ENCODE measurements at regions of chr3 and their contacts with region 1.

Region 1: GRCh38 chr3:138923531-138923994 is 23.4 kb downstream of the FOXL2 start:
- DNase-seq: peak; percentile 72
- H3K4me3 Mint-ChIP-seq: no peak overlapping the region
- H3K27ac Mint-ChIP-seq: no peak overlapping the region
- H3K4me1 Mint-ChIP-seq: peaks cover 2% of the 10 kb centered on the region
- H3K27me3 Mint-ChIP-seq: peaks cover 11% of the 10 kb centered on the region

Region 2: GRCh38 chr3:138417559-138417982 is 506.0 kb before region 1 on chr3:
- intact Hi-C with region 1: loop called (anchors 1 kb)
- DNase-seq: peak; percentile 36
- H3K4me3 Mint-ChIP-seq: no peak overlapping the region
- H3K27ac Mint-ChIP-seq: no peak overlapping the region
- H3K4me1 Mint-ChIP-seq: peaks cover 2% of the 10 kb centered on the region
- H3K27me3 Mint-ChIP-seq: peaks cover 21% of the 10 kb centered on the region

Region 3: GRCh38 chr3:138479438-138479863 is 444.1 kb before region 1 on chr3:
- intact Hi-C with region 1: loop called (anchors 2 kb)
- DNase-seq: no peak
- H3K4me3 Mint-ChIP-seq: no peak overlapping the region
- H3K27ac Mint-ChIP-seq: no peak overlapping the region
- H3K4me1 Mint-ChIP-seq: no peaks in the 10 kb centered on the region
- H3K27me3 Mint-ChIP-seq: peaks cover 7% of the 10 kb centered on the region

Region 4: DNA sequence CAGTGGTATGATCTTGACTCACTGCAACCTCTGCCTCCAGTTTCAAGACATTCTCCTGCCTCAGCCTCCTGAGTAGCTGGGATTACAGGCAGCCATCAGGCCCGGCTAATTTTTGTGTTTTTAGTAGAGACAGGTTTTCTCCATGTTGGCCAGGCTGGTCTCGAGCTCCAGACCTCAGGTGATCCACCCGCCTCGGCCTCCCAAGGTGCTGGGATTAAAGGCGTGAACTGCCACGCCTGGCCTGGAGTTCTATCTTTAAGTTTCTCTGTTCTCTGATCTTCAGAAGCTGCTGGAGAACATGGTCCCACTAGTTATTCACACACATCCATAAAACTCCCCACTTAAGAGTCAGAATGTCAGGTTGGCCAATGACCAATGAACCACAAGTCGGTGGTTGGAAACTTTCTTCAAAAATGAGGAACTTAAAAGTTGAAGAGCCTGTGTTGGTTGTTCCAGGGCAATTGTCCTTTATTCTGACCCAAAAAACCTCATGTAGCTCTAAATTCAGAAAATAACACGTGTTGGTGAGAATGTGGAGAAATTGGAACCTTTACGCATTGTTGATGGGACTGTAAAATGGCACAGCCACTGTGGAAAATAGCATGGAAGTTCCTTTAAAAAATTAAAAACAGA is 32.9 kb before region 1 on chr3:
- intact Hi-C with region 1: no loop called
- DNase-seq: no peak
- H3K4me3 Mint-ChIP-seq: no peak overlapping the region
- H3K27ac Mint-ChIP-seq: no peak overlapping the region
- H3K4me1 Mint-ChIP-seq: peaks cover 2% of the 10 kb centered on the region
- H3K27me3 Mint-ChIP-seq: no peaks in the 10 kb centered on the region